ENCODE measurements at regions of chr17 and their contacts with region 1.

Region 1: GRCh38 chr17:34892461-34893249 is 68.6 kb downstream of the CCT6B start:
- DNase-seq: peak in 6 of 9 donors; percentile 10 to 38 (median 30)
- ATAC-seq: no peak
- H3K4me3 ChIP-seq: no peak overlapping the region
- H3K4me3 Mint-ChIP-seq: no peak overlapping the region
- H3K27ac ChIP-seq: no peak overlapping the region
- H3K27ac Mint-ChIP-seq: no peak overlapping the region
- H3K4me1 ChIP-seq: no peaks in the 10 kb centered on the region
- H3K4me1 Mint-ChIP-seq: peaks cover 0 to 2% (median 0%) of the 10 kb centered on the region in 7 donors
- H3K27me3 ChIP-seq: no peaks in the 10 kb centered on the region
- H3K27me3 Mint-ChIP-seq: peaks cover 20 to 53% (median 24%) of the 10 kb centered on the region in 5 donors

Region 2: DNA sequence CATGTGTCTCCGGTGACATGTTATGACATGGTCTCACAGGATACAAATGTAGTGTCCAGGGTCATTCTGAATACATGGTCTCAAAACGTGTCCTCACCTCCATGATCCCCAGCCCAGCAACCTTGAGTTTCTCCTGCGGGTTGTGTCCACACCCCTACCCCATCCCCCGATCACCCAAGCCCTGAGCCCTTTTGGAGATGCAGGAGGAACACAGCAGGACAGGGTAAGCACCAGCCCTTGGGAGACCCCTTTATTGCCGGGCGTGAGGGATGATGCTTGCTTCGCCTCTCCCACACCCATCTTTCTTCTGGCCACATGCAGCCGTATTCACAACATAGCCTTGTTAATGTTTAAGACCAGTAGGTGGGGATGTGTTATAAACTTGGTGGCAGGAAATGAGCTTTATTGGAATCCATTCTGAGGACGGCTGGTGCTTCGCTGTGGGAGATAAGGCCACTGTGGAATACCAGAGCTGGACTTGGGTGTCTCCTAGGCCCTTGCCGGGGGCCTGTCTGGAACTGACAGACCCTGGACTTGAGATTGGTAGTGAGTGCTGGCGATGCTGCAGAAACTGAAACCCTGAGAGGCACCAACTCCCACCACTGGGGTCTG is 307.7 kb before region 1 on chr17:
- CTCF ChIA-PET with region 1: no interaction called
- POLR2A ChIA-PET with region 1: no interaction called
- intact Hi-C with region 1: loop called in 1 of 2 experiments (anchors 1 kb)
- DNase-seq: peak in 4 of 9 donors; percentile 21 to 35 (median 32)
- ATAC-seq: peak; percentile 51
- H3K4me3 ChIP-seq: no peak overlapping the region
- H3K4me3 Mint-ChIP-seq: no peak overlapping the region
- H3K27ac ChIP-seq: no peak overlapping the region
- H3K27ac Mint-ChIP-seq: no peak overlapping the region
- H3K4me1 ChIP-seq: peaks cover 0 to 6% of the 10 kb centered on the region in 2 donors
- H3K4me1 Mint-ChIP-seq: peaks cover 0 to 15% (median 4%) of the 10 kb centered on the region in 7 donors
- H3K27me3 ChIP-seq: peaks cover 0 to 7% of the 10 kb centered on the region in 2 donors
- H3K27me3 Mint-ChIP-seq: peaks cover 41 to 78% (median 52%) of the 10 kb centered on the region in 5 donors

Region 3: DNA sequence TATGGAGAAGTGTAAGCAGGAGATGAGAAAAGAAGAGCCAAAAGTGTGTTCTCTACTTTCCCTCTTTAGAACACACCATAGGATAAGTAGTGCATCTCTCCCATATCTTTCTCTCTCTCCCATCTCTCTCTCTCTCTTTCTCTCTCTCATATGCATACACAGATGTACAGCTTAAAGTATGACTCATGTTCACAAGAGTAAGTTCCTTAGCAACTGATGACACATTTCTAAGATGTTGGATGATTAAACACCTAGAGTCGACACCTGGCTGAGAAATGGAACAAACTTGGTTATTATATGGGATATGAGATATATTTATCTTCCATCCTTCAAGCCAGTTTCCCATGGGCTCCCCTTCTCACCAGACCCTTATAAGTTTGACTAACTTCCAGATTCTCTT is 199.7 kb before region 1 on chr17:
- CTCF ChIA-PET with region 1: no interaction called
- POLR2A ChIA-PET with region 1: no interaction called
- intact Hi-C with region 1: no loop called
- DNase-seq: no peak
- ATAC-seq: no peak
- H3K4me3 ChIP-seq: no peak overlapping the region
- H3K4me3 Mint-ChIP-seq: no peak overlapping the region
- H3K27ac ChIP-seq: no peak overlapping the region
- H3K27ac Mint-ChIP-seq: no peak overlapping the region
- H3K4me1 ChIP-seq: no peaks in the 10 kb centered on the region
- H3K4me1 Mint-ChIP-seq: no peaks in the 10 kb centered on the region
- H3K27me3 ChIP-seq: no peaks in the 10 kb centered on the region
- H3K27me3 Mint-ChIP-seq: peaks cover 15 to 51% (median 40%) of the 10 kb centered on the region in 5 donors

Region 4: DNA sequence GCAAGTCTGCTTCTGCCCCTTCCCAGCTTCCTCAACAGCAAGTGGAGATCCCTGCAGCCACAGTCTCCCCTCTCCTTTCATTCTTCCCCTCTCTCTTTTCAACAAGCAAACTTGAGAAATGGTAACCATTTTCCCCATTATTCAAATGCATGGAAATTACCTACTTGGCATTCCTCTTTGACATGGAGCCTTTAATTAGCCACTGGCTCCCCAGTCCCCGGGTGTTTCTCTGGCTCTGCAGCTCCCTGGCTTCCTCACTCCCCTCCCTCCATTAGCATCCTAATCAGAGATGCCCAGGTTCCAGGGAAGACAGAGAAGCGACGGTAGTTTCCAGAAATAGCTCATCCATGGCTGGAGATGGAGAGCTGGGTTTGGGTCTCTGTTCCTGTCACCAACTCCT is 47.4 kb before region 1 on chr17:
- CTCF ChIA-PET with region 1: no interaction called
- POLR2A ChIA-PET with region 1: no interaction called
- intact Hi-C with region 1: no loop called
- DNase-seq: no peak
- ATAC-seq: no peak
- H3K4me3 ChIP-seq: no peak overlapping the region
- H3K4me3 Mint-ChIP-seq: peak overlapping the region in 2 of 10 donors; percentile 16 to 24
- H3K27ac ChIP-seq: no peak overlapping the region
- H3K27ac Mint-ChIP-seq: peak overlapping the region in 2 of 9 donors; percentile 33 to 39
- H3K4me1 ChIP-seq: peaks cover 4 to 48% of the 10 kb centered on the region in 2 donors
- H3K4me1 Mint-ChIP-seq: peaks cover 0 to 35% (median 7%) of the 10 kb centered on the region in 7 donors
- H3K27me3 ChIP-seq: no peaks in the 10 kb centered on the region
- H3K27me3 Mint-ChIP-seq: peaks cover 0 to 3% (median 0%) of the 10 kb centered on the region in 5 donors

Region 5: DNA sequence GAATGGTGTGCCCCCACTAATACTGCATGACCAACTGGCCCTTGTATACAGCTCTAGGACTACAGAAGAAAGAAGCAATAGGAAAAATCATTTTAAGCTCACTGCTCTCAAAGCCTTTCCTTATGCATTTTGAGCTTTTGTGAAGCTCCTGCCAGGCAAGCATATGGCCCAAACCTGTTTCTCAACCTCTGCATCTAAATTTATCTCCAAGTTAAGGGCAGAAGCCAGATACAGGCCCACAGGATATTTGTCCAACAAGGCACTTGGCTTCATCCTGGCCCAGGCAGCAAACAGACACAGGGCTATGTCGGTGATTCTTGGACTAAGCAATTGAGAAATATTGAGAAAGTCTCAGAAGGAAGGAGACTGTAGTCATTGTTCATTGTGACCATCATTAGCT is 24.7 kb after region 1 on chr17:
- CTCF ChIA-PET with region 1: no interaction called
- POLR2A ChIA-PET with region 1: no interaction called
- intact Hi-C with region 1: no loop called
- DNase-seq: no peak
- ATAC-seq: no peak
- H3K4me3 ChIP-seq: no peak overlapping the region
- H3K4me3 Mint-ChIP-seq: no peak overlapping the region
- H3K27ac ChIP-seq: no peak overlapping the region
- H3K27ac Mint-ChIP-seq: no peak overlapping the region
- H3K4me1 ChIP-seq: no peaks in the 10 kb centered on the region
- H3K4me1 Mint-ChIP-seq: no peaks in the 10 kb centered on the region
- H3K27me3 ChIP-seq: no peaks in the 10 kb centered on the region
- H3K27me3 Mint-ChIP-seq: peaks cover 0 to 4% (median 0%) of the 10 kb centered on the region in 5 donors

Measured in naive thymus-derived CD4-positive, alpha-beta T cell (primary cell).